ENCODE measurements at regions of chr11 and their contacts with region 1.

Region 1: GRCh38 chr11:11798586-11799438 is 43.0 kb upstream of the USP47 start:
- H3K4me3 Mint-ChIP-seq: no peak overlapping the region
- H3K27ac Mint-ChIP-seq: no peak overlapping the region
- H3K4me1 Mint-ChIP-seq: no peaks in the 10 kb centered on the region
- H3K27me3 Mint-ChIP-seq: peaks cover 28% of the 10 kb centered on the region

Region 2: GRCh38 chr11:11701070-11701469 is 97.7 kb before region 1 on chr11:
- intact Hi-C with region 1: no loop called
- H3K4me3 Mint-ChIP-seq: no peak overlapping the region
- H3K27ac Mint-ChIP-seq: no peak overlapping the region
- H3K4me1 Mint-ChIP-seq: no peaks in the 10 kb centered on the region
- H3K27me3 Mint-ChIP-seq: peaks cover 9% of the 10 kb centered on the region

Region 3: GRCh38 chr11:11848891-11849746 is 50.3 kb after region 1 on chr11:
- intact Hi-C with region 1: loop called (anchors 2 kb)
- H3K4me3 Mint-ChIP-seq: no peak overlapping the region
- H3K27ac Mint-ChIP-seq: no peak overlapping the region
- H3K4me1 Mint-ChIP-seq: peaks cover 41% of the 10 kb centered on the region
- H3K27me3 Mint-ChIP-seq: no peaks in the 10 kb centered on the region

Region 4: DNA sequence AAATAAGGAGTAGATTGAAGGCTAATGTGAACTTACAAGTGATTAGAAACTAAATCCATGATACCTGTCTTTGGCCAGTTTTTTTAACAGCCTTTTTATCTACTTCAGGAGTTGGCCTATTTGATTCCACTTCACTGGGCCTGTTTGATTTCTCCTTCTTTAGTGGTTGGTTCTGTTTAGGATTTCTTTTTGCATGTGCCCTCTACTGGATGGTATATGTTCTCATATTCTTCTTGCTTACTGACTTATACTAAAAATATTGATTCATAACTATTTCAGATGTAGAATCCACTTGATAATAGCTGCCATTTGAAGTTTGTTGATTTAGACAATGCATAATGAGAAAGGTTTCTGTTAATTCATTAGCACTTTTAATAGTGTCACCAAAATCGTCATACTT is 96.9 kb after region 1 on chr11:
- intact Hi-C with region 1: loop called (anchors 5 kb)
- H3K4me3 Mint-ChIP-seq: no peak overlapping the region
- H3K27ac Mint-ChIP-seq: no peak overlapping the region
- H3K4me1 Mint-ChIP-seq: no peaks in the 10 kb centered on the region
- H3K27me3 Mint-ChIP-seq: no peaks in the 10 kb centered on the region

Region 5: GRCh38 chr11:11987503-11988022 is 188.8 kb after region 1 on chr11:
- intact Hi-C with region 1: no loop called
- H3K4me3 Mint-ChIP-seq: no peak overlapping the region
- H3K27ac Mint-ChIP-seq: no peak overlapping the region
- H3K4me1 Mint-ChIP-seq: peaks cover 5% of the 10 kb centered on the region
- H3K27me3 Mint-ChIP-seq: peaks cover 4% of the 10 kb centered on the region

Region 6: DNA sequence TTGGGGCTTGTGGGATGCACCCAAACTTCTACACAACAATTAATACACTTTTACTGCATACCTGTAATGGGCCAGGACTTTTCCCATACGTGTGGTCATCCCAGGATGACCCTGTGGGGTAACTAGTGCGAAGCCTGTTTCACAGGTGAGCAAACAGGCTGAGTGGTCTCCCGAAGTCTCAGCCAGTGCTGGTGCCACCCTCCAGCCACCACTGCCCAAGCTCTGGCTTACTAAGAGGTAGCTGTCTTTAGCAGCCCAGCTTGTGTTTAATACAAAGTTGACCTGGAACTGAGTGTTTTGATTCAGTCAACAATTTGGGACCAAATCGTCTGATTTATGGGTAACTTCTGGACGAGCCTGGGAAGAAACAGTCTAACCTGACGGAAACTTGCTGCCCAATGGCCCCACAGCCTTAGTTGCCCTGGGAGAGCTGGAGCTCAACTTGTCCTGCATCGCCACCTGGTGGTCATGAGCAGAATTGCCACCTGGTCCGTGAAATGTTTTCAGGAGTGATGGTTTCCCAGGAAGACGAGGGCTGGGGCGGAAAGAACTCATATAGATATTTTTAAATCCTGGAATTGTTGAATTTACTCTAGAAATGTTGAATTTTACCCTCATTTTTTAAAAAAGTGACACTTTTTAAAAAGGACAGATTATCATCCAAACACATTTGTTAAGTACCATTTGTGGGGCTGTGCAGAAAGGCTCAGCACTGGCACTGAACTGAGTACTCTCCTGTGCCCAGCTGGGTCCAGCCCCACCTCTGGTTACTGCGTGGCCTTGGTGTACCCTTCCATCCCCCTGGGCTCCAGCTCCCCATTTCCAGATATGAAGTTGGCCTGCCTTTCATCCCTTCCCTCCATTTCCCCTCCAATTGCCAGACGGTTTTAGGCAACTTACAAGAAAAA is 483.0 kb after region 1 on chr11:
- intact Hi-C with region 1: loop called (anchors 2 kb)
- H3K4me3 Mint-ChIP-seq: no peak overlapping the region
- H3K27ac Mint-ChIP-seq: no peak overlapping the region
- H3K4me1 Mint-ChIP-seq: peaks cover 5% of the 10 kb centered on the region
- H3K27me3 Mint-ChIP-seq: peaks cover 2% of the 10 kb centered on the region

Measured in dendritic cell treated with granulocyte-macrophage colony-stimulating factor and Interleukin-4, amounts not matched to agents 40 ng/mL and 50 ng/mL, for 4 days (primary cell).